Prostate gland (tissue), 2 donors: ENCODE measurements at regions of chr2 and their contacts with region 1.

Region 1: GRCh38 chr2:189661148-189661956 is at the start of gene ASNSD1:
- DNase-seq: peak; percentile 97
- H3K4me3 ChIP-seq: peak within 1 kb of the TSS; percentile 63 to 87
- H3K27ac ChIP-seq: peak within 1 kb of the TSS; percentile 70 to 86
- H3K4me1 ChIP-seq: no peaks in the 10 kb centered on the region
- H3K27me3 ChIP-seq: no peaks in the 10 kb centered on the region
- CTCF ChIP-seq: peak; percentile 83 to 100 (median 99)
- POLR2A ChIP-seq: peak; percentile 85
- total RNA-seq, gene ASNSD1: 35.5 to 36.1 TPM

Region 2: DNA sequence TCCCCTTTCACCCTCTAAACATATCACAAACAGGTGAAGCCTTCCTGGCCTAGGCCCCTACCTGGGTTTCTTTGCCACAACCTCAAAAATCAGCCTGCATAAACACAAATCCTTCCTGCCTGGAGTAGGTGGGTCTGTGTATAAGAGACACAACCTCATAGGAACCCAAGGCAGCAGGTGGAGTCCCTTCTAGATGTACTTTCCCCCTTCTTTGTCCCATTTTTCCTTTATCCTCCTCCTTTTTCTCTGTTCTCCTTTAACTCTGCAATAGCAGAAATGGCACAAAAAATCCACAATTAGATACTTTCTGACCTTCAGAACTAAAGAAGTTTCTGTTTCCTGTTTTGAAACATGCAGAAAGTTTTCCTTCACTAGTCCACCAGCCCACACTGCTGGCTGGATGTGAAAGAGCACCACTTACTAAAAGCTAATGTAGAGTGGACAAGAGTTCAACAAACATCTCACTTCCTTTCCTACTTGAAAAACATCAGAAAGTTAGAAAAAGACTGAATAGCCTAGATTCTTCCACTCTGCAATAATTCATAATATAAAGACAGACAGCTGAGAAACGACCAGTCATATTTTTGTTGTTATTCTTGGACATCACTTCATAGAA is 91.9 kb before region 1 on chr2:
- intact Hi-C with region 1: no loop called
- DNase-seq: no peak
- H3K4me3 ChIP-seq: no peak overlapping the region
- H3K27ac ChIP-seq: no peak overlapping the region
- H3K4me1 ChIP-seq: no peaks in the 10 kb centered on the region
- H3K27me3 ChIP-seq: no peaks in the 10 kb centered on the region
- CTCF ChIP-seq: no peak
- POLR2A ChIP-seq: no peak

Region 3: GRCh38 chr2:189698020-189698887 is 36.9 kb after region 1 on chr2:
- intact Hi-C with region 1: loop called (anchors 2 kb)
- DNase-seq: peak; percentile 40
- H3K4me3 ChIP-seq: no peak overlapping the region
- H3K27ac ChIP-seq: no peak overlapping the region
- H3K4me1 ChIP-seq: no peaks in the 10 kb centered on the region
- H3K27me3 ChIP-seq: no peaks in the 10 kb centered on the region
- CTCF ChIP-seq: peak in 3 of 4 experiments; percentile 52 to 63 (median 61)
- POLR2A ChIP-seq: no peak

Region 4: DNA sequence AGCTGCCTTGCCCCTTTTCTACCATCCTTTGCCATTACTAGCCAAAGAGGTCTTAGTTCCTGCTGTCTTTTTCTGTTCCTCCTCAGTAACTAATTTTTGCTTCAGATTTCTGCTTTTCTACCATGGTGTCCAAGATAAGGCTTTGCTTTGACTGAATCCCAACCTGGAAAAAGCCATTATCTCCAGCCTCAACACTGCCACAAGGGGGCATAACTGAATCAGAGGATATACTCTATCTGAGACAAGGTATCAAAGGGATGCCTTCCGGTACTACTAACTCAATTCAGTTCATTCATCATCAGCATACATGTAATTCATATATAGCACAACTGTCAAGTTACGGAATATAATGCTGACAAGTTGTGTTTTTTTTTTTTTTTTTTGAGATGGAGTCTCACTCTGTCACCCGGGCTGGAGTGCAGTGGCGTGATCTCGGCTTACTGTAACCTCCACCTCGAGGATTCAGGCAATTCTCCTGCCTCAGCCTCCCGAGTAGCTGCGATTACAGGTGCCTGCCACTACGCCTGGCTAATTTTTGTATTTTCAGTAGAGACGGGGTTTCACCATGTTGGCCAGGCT is 89.8 kb after region 1 on chr2:
- intact Hi-C with region 1: no loop called
- DNase-seq: no peak
- H3K4me3 ChIP-seq: no peak overlapping the region
- H3K27ac ChIP-seq: no peak overlapping the region
- H3K4me1 ChIP-seq: no peaks in the 10 kb centered on the region
- H3K27me3 ChIP-seq: no peaks in the 10 kb centered on the region
- CTCF ChIP-seq: peak; percentile 17 to 55 (median 36)
- POLR2A ChIP-seq: no peak